ENCODE measurements at regions of chr18 and their contacts with region 1.

Region 1: GRCh38 chr18:32470713-32471633 is at the start of gene GAREM1:
- DNase-seq: peak; percentile 93 to 97 (median 96)
- ATAC-seq: peak; percentile 96 to 98 (median 98)
- H3K4me3 ChIP-seq: peak within 1 kb of the TSS; percentile 49 to 98 (median 77)
- H3K27ac ChIP-seq: peak within 1 kb of the TSS; percentile 56 to 88 (median 82)
- H3K4me1 ChIP-seq: peaks cover 0 to 42% (median 17%) of the 10 kb centered on the region in 12 donors
- H3K27me3 ChIP-seq: peaks cover 0 to 42% (median 0%) of the 10 kb centered on the region in 9 donors
- CTCF ChIP-seq: peak; percentile 35 to 94 (median 74)
- POLR2A ChIP-seq: peak; percentile 46 to 96
- total RNA-seq, gene GAREM1: 8.8 to 28.8 (median 13.4) TPM

Region 2: GRCh38 chr18:32158108-32158624 is 312.8 kb before region 1 on chr18:
- intact Hi-C with region 1: loop called (anchors 1 to 10 kb)
- DNase-seq: peak; percentile 69 to 80 (median 73)
- ATAC-seq: peak; percentile 80 to 99 (median 97)
- H3K4me3 ChIP-seq: peak overlapping the region in 7 of 12 donors; percentile 6 to 39 (median 22)
- H3K27ac ChIP-seq: no peak overlapping the region
- H3K4me1 ChIP-seq: peaks cover 0 to 8% (median 3%) of the 10 kb centered on the region in 12 donors
- H3K27me3 ChIP-seq: peaks cover 0 to 5% (median 0%) of the 10 kb centered on the region in 9 donors
- CTCF ChIP-seq: peak; percentile 74 to 88 (median 82)
- POLR2A ChIP-seq: no peak

Region 3: DNA sequence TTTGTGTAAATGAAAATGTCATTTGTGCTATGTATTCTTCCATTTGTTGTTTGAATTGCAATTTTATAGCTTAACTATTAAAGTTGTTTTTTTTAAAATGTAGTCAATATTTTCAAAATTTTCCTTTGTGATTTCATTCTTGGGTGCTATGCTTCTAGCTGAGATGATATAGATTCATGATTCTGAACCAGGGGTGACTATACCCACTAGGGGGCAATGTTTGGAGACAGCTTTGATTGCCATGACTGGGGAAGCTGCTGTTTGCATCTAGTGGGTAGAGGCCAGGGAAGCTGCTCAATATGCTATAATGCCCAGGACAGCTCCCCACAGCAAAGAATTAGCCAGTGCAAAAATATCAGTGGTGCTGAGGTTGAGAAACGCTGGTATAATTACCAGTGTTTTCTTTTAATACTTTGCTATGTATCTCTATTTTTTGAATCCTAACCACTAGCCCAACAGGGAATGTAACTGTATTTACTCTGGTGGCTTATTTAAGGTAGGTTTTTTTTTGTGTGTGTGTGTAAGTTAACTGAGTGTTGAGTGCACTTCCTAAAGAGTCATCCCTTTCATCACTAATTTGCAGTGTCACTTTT is 181.4 kb before region 1 on chr18:
- intact Hi-C with region 1: loop called in 8 of 10 experiments (anchors 1 to 5 kb)
- DNase-seq: peak in 2 of 5 donors; percentile 33 to 38
- ATAC-seq: peak; percentile 61 to 82 (median 70)
- H3K4me3 ChIP-seq: no peak overlapping the region
- H3K27ac ChIP-seq: no peak overlapping the region
- H3K4me1 ChIP-seq: peaks cover 0 to 3% (median 0%) of the 10 kb centered on the region in 12 donors
- H3K27me3 ChIP-seq: no peaks in the 10 kb centered on the region
- CTCF ChIP-seq: peak; percentile 56 to 73 (median 64)
- POLR2A ChIP-seq: no peak

Region 4: GRCh38 chr18:32349728-32350395 is 121.1 kb before region 1 on chr18:
- intact Hi-C with region 1: loop called in 2 of 10 experiments (anchors 10 kb)
- DNase-seq: peak in 4 of 5 donors; percentile 78 to 84 (median 81)
- ATAC-seq: peak; percentile 45 to 79 (median 63)
- H3K4me3 ChIP-seq: peak overlapping the region in 3 of 12 donors; percentile 7 to 19 (median 19)
- H3K27ac ChIP-seq: peak overlapping the region; percentile 19 to 83 (median 70)
- H3K4me1 ChIP-seq: peaks cover 0 to 46% (median 18%) of the 10 kb centered on the region in 12 donors
- H3K27me3 ChIP-seq: no peaks in the 10 kb centered on the region
- CTCF ChIP-seq: no peak
- POLR2A ChIP-seq: no peak

Region 5: GRCh38 chr18:32383050-32383819 is 87.7 kb before region 1 on chr18:
- intact Hi-C with region 1: loop called in 5 of 10 experiments (anchors 10 kb)
- DNase-seq: no peak
- ATAC-seq: peak; percentile 55 to 75 (median 68)
- H3K4me3 ChIP-seq: no peak overlapping the region
- H3K27ac ChIP-seq: peak overlapping the region in 6 of 12 donors; percentile 3 to 53 (median 22)
- H3K4me1 ChIP-seq: peaks cover 0 to 48% (median 24%) of the 10 kb centered on the region in 12 donors
- H3K27me3 ChIP-seq: no peaks in the 10 kb centered on the region
- CTCF ChIP-seq: no peak
- POLR2A ChIP-seq: no peak

Region 6: DNA sequence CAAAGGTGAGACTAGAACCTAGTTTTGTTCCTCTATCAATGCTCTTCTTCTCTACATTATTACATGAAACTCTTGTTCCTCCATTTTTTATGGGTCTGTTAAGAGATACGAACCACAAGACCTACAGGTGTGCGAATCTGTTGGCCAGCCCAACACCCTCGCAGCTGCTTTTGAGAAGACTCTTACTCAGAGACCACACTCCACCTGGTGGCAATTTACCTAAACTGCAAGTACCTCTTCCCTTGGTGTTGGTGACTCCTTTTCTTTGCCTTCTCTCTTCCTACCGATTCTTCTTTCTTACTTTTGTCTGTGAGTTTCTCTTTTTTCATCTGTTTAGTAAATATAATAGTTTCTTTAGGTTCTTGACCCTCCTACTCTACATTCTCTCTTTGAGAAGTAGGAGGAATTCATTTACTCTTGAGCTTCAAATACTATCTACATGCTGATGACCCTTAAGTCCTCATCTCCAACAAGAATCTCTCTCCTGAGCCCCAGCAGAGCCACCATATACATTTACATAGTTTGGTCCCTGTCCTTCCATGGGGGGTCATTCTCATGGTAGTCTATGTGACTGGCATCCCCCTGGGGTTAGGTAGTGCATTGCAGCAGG is 81.6 kb after region 1 on chr18:
- intact Hi-C with region 1: loop called in 2 of 10 experiments (anchors 5 kb)
- DNase-seq: peak in 4 of 5 donors; percentile 36 to 45 (median 40)
- ATAC-seq: peak in 2 of 4 donors; percentile 70
- H3K4me3 ChIP-seq: no peak overlapping the region
- H3K27ac ChIP-seq: no peak overlapping the region
- H3K4me1 ChIP-seq: no peaks in the 10 kb centered on the region
- H3K27me3 ChIP-seq: peaks cover 0 to 5% (median 0%) of the 10 kb centered on the region in 9 donors
- CTCF ChIP-seq: peak; percentile 63 to 80 (median 73)
- POLR2A ChIP-seq: no peak

Measured in heart left ventricle (tissue), 16 donors.